Spleen (tissue), 13 donors: ENCODE measurements at regions of chr3 and their contacts with region 1.

Region 1: GRCh38 chr3:141000027-141000663 is 51.0 kb upstream of the SPSB4 start:
- DNase-seq: no peak
- H3K4me3 ChIP-seq: no peak overlapping the region
- H3K27ac ChIP-seq: no peak overlapping the region
- H3K4me1 ChIP-seq: no peaks in the 10 kb centered on the region
- H3K27me3 ChIP-seq: no peaks in the 10 kb centered on the region
- CTCF ChIP-seq: peak; percentile 7 to 64 (median 39)
- POLR2A ChIP-seq: no peak

Region 2: GRCh38 chr3:140883428-140884040 is 116.6 kb before region 1 on chr3:
- intact Hi-C with region 1: no loop called
- DNase-seq: no peak
- H3K4me3 ChIP-seq: no peak overlapping the region
- H3K27ac ChIP-seq: no peak overlapping the region
- H3K4me1 ChIP-seq: no peaks in the 10 kb centered on the region
- H3K27me3 ChIP-seq: peaks cover 0 to 12% (median 0%) of the 10 kb centered on the region in 7 donors
- CTCF ChIP-seq: no peak
- POLR2A ChIP-seq: no peak

Region 3: GRCh38 chr3:141192345-141192744 is 192.2 kb after region 1 on chr3:
- intact Hi-C with region 1: loop called (anchors 10 kb)
- DNase-seq: peak; percentile 98
- H3K4me3 ChIP-seq: no peak overlapping the region
- H3K27ac ChIP-seq: no peak overlapping the region
- H3K4me1 ChIP-seq: peaks cover 0 to 10% (median 8%) of the 10 kb centered on the region in 6 donors
- H3K27me3 ChIP-seq: peaks cover 0 to 28% (median 0%) of the 10 kb centered on the region in 7 donors
- CTCF ChIP-seq: peak; percentile 92 to 100 (median 97)
- POLR2A ChIP-seq: no peak